ENCODE measurements at regions of chr16 and their contacts with region 1.

Region 1: GRCh38 chr16:19907161-19907992 is 22.7 kb upstream of the GPRC5B start:
- DNase-seq: peak; percentile 88
- ATAC-seq: peak; percentile 95
- H3K4me3 Mint-ChIP-seq: peak overlapping the region; percentile 12; the same call in 1 of the 2 replicates
- H3K27ac Mint-ChIP-seq: peak overlapping the region; percentile 66; the same call in 1 of the 2 replicates
- H3K4me1 Mint-ChIP-seq: peaks cover 15% of the 10 kb centered on the region
- H3K27me3 Mint-ChIP-seq: no peaks in the 10 kb centered on the region; the same call in 1 of the 2 replicates
- CTCF ChIP-seq: peak; percentile 92

Region 2: DNA sequence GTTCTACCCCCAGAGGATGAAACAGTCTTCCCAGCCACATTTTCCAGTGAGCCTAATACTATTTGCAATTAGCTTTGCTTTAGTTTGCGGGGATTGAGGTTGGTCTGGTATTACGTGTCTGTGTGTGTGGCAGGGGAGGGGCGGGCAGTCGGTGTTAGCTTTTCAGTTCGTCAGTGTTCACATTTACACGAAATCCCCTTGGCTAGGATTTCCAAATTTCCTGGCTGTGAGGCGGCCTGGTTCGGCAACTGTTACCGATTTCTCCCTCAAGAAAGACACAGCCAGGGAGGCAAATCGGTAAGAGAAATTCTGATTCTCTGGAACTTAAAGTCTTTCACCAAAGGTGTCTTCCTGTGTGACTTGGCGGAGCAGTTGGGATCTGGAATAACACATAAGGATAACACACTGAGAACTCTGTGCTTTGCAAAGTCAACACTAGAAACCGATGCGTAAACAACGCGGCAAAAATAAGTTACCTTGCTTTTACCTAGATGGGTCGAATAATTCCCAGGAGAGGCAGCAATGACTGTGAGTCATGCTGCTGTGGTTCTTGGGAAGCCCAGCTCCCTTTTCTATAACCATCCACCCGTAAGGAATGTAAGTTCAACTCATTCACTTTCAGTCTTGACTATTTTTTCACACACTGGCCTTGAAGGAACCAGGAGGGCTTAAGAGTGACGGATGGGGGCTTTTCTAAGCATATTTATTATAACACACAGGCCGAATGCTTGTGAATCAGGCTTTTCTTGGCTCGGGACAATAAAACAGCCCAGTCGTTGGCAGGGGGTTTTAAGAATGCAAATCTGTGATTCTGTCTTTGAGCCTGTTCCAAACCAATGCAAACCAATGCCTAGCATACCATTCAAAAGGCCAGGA is 47.0 kb before region 1 on chr16:
- CTCF ChIA-PET with region 1: no interaction called
- POLR2A ChIA-PET with region 1: no interaction called
- DNase-seq: no peak
- ATAC-seq: peak; percentile 79
- H3K4me3 Mint-ChIP-seq: peak overlapping the region; percentile 51
- H3K27ac Mint-ChIP-seq: peak overlapping the region; percentile 100
- H3K4me1 Mint-ChIP-seq: peaks cover 87% of the 10 kb centered on the region
- H3K27me3 Mint-ChIP-seq: no peaks in the 10 kb centered on the region
- CTCF ChIP-seq: no peak

Region 3: DNA sequence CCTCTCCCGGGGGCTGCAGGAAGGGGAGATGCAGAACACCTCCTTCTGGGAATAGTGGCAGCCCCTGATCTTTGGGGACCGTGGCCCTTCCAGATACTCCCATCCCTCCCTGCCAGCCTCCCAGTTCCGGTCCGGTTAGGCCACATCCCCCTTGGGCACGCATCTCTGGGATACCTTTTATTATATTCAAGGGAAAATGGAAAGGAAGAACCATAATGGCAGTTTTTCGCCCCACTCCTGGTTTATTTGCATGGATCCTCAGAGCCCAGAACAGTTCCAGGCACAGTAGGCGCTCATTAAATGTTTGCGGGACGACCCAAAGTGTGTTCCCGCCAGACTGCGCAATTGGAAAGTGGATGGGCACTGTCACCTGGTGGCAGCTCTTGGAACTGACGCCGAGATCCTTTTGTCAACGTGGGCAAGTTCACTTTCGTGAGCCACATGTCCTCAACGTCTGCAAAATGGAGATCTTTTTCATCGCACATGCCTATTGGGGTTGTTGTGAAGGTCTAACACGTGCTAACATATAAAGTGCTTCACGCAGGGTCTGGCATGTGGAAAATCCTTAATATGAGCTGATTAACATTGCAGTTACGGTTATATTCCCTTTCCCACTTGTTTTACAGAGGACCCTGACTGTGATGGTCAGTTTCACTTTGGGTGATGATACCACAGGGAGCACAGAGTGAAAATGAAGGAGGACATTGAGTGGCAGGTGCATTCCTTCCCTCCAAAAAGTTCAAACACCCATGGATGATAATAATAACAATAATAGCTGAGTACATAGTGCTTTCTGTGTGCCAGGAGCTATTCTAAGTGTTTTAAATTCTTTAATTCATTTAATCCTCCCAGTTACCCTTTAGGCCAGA is 21.1 kb before region 1 on chr16:
- CTCF ChIA-PET with region 1: interaction called, 15 read pairs
- POLR2A ChIA-PET with region 1: no interaction called
- DNase-seq: peak; percentile 87
- ATAC-seq: peak; percentile 8
- H3K4me3 Mint-ChIP-seq: peak overlapping the region; percentile 74
- H3K27ac Mint-ChIP-seq: no peak overlapping the region; the same call in 1 of the 2 replicates
- H3K4me1 Mint-ChIP-seq: peaks cover 31% of the 10 kb centered on the region
- H3K27me3 Mint-ChIP-seq: peaks cover 19% of the 10 kb centered on the region
- CTCF ChIP-seq: peak; percentile 97

Region 4: GRCh38 chr16:19991614-19992013 is 84.2 kb after region 1 on chr16:
- CTCF ChIA-PET with region 1: interaction called, 48 read pairs
- POLR2A ChIA-PET with region 1: no interaction called
- DNase-seq: peak; percentile 17
- ATAC-seq: peak; percentile 74
- H3K4me3 Mint-ChIP-seq: peak overlapping the region; percentile 4; the same call in 1 of the 2 replicates
- H3K27ac Mint-ChIP-seq: no peak overlapping the region
- H3K4me1 Mint-ChIP-seq: peaks cover 13% of the 10 kb centered on the region
- H3K27me3 Mint-ChIP-seq: no peaks in the 10 kb centered on the region; the same call in 1 of the 2 replicates
- CTCF ChIP-seq: no peak

Region 5: DNA sequence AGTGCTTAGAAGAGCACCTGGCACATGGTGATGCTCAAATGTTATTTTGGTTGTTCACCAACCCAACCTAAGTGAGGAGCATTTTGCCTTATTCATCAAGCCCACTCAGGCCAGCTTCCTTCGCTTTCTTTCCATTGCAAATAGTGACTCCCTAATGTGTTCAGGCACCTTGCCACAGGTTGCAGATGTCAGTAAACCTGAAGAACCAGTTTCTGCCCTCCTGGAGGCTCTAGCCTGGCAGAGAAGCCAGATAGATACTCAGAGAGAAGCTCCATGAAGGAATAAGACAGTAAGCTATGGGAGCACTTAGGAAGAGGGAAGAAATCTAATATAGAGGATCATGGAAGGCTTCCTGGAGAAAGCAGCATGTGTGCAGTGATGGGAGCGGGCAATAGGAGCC is 142.5 kb after region 1 on chr16:
- CTCF ChIA-PET with region 1: interaction called, 10 read pairs
- POLR2A ChIA-PET with region 1: no interaction called
- DNase-seq: no peak
- ATAC-seq: peak; percentile 47
- H3K4me3 Mint-ChIP-seq: no peak overlapping the region
- H3K27ac Mint-ChIP-seq: no peak overlapping the region
- H3K4me1 Mint-ChIP-seq: peaks cover 10% of the 10 kb centered on the region
- H3K27me3 Mint-ChIP-seq: no peaks in the 10 kb centered on the region
- CTCF ChIP-seq: no peak

Region 6: DNA sequence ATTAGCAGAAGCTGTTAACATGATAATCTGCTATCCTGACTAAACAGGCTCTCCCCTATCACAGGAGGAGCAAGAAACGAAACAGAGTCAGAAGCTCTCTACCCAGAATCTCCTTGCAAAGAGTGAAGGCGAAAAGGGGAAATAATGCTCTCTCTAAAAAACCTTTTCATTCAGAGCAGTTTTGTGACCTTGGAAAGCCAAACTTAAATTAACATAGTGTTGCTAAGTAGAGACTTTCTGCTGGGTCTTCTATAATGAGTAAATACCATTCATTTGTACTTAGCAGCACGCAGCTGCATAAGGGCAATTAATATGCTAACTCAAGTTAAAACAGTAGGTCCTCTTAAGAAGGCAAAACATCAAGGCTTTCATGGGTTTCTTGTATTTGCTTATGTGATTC is 268.0 kb after region 1 on chr16:
- CTCF ChIA-PET with region 1: interaction called, 12 read pairs
- POLR2A ChIA-PET with region 1: no interaction called
- DNase-seq: no peak
- ATAC-seq: peak; percentile 87
- H3K4me3 Mint-ChIP-seq: peak overlapping the region; percentile 41
- H3K27ac Mint-ChIP-seq: peak overlapping the region; percentile 94
- H3K4me1 Mint-ChIP-seq: peaks cover 55% of the 10 kb centered on the region
- H3K27me3 Mint-ChIP-seq: peaks cover 20% of the 10 kb centered on the region
- CTCF ChIP-seq: no peak

Region 7: DNA sequence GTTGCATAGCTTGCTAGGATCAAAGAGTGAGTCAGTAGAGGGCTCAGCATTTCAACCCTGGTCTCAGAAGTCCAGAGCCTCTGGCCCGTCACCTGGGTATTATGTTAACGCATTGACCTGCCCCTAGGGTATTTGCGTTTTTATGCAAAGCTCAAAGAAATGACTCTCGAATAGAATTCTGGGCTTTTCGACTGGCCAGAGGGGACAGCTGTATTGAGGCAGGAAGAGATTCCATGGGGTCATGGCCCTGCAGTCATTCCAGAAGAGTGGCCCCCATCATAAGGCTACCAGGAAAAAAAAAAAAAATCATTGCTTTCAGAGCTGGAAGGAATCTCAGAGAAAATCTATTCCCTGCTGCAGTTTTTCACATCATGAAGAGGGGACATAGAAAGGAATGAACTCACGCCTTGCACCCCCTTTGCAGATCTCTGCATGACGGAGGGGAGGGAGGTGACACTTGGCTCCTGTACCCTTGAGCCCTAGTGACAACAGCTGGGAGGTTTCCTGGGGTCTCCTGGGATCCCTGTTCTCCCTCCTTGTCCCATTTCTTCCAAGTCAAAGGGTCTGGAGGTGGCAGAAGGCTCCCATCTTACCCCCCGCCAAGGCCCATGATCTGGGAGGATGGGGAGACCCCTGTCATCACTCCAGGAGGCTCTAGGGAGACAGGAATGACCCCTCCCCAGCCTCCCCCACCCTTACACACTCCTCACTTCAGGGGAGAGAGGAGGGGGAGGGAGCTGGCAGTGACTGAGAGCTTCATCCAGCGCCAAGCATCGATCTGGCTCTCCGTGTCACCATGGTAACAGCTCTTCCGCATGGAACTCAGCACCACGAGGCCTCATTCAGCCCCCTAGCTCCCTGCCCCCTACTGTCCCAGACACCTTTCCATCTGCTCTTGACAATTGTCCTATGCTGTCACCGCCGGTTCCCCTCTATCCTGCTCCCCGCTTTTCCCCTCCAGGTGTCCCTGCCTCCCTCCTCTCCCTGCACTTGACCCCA is 384.1 kb after region 1 on chr16:
- CTCF ChIA-PET with region 1: interaction called, 30 read pairs
- POLR2A ChIA-PET with region 1: no interaction called
- DNase-seq: peak; percentile 11
- ATAC-seq: no peak; the same call in 1 of the 2 replicates
- H3K4me3 Mint-ChIP-seq: no peak overlapping the region
- H3K27ac Mint-ChIP-seq: no peak overlapping the region
- H3K4me1 Mint-ChIP-seq: peaks cover 33% of the 10 kb centered on the region
- H3K27me3 Mint-ChIP-seq: peaks cover 2% of the 10 kb centered on the region
- CTCF ChIP-seq: no peak

Region 8: GRCh38 chr16:20383106-20384029 is 476.0 kb after region 1 on chr16:
- CTCF ChIA-PET with region 1: interaction called, 159 read pairs
- POLR2A ChIA-PET with region 1: no interaction called
- DNase-seq: peak; percentile 80
- ATAC-seq: peak; percentile 96
- H3K4me3 Mint-ChIP-seq: no peak overlapping the region
- H3K27ac Mint-ChIP-seq: no peak overlapping the region
- H3K4me1 Mint-ChIP-seq: peaks cover 9% of the 10 kb centered on the region
- H3K27me3 Mint-ChIP-seq: no peaks in the 10 kb centered on the region
- CTCF ChIP-seq: peak; percentile 62